ENCODE measurements at regions of chr6 and their contacts with region 1.

Region 1: GRCh38 chr6:27146706-27147505 is 100.6 kb upstream of the PRSS16 start:
- DNase-seq: peak; percentile 95
- CTCF ChIP-seq: no peak

Region 2: DNA sequence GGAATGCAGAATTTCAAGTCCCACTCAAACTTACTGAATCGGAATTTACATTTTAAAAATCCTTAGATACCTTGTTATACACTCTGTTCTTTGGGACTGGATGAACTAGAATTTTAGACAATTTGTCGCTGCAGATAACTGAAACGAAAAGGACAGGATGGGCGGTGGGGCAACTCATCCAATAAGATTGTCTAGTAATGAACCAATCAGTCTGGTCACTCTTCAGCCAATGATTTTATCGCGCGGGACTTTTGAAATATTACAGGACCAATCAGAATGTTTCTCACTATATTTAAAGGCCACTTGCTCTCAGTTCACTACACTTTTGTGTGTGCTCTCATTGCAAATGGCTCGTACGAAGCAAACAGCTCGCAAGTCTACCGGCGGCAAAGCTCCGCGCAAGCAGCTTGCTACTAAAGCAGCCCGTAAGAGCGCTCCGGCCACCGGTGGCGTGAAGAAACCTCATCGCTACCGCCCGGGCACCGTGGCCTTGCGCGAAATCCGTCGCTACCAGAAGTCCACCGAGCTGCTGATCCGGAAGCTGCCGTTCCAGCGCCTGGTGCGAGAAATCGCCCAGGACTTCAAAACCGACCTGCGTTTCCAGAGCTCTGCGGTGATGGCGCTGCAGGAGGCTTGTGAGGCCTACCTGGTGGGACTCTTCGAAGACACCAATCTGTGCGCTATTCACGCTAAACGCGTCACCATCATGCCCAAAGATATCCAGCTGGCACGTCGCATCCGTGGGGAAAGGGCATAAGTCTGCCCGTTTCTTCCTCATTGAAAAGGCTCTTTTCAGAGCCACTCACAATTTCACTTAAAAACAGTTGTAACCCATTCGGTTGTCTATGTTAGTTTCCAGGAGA is 1101.6 kb before region 1 on chr6:
- CTCF ChIA-PET with region 1: no interaction called
- POLR2A ChIA-PET with region 1: interaction called, 11 read pairs
- DNase-seq: peak; percentile 88
- CTCF ChIP-seq: peak; percentile 12

Region 3: GRCh38 chr6:26122793-26123674 is 1023.9 kb before region 1 on chr6:
- CTCF ChIA-PET with region 1: no interaction called
- POLR2A ChIA-PET with region 1: interaction called, 12 read pairs
- DNase-seq: peak; percentile 83
- CTCF ChIP-seq: no peak

Region 4: GRCh38 chr6:27126815-27127537 is 19.9 kb before region 1 on chr6:
- CTCF ChIA-PET with region 1: interaction called, 19 read pairs
- POLR2A ChIA-PET with region 1: interaction called, 211 read pairs
- DNase-seq: peak; percentile 77
- CTCF ChIP-seq: peak; percentile 90

Region 5: GRCh38 chr6:27132532-27133280 is 14.2 kb before region 1 on chr6:
- CTCF ChIA-PET with region 1: interaction called, 19 read pairs
- POLR2A ChIA-PET with region 1: interaction called, 211 read pairs
- DNase-seq: peak; percentile 95
- CTCF ChIP-seq: no peak

Region 6: DNA sequence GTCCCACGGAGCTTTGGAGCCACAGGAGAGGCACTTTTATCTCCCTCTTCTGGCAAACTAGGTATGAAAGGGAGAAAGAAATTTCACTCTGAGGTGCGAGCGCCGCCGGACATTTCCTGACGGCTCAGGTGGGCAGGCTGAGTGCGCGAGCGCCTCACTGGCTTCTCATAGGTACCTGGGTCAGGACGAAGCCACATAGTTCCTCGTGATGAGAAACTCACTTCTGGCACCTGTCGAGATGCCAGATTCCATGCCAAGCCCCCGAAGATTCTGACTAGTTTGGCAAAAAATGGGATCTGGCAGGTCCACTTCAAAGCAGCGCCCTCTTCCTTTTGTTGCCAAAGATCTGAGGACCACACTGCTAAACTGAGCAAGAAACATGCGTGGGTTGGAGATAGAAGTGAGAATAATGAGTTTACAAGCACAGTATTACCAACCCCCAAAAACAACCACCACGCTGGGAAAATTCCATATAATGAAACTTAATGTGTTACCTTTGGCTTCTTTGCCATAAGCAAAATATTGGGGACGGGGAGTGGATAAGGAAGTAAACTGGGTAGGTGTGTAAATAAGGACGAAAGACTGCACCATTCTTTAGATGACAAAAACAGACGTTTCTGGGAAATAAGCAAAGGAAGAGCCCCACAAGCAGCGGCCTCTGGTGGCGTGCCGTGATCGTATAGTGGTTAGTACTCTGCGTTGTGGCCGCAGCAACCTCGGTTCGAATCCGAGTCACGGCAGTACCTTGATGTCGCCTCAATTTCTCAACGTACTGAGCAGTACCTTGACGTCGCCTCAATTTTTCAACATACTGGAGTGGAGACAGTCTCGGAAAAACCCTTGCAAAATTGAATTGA is 10.8 kb after region 1 on chr6:
- CTCF ChIA-PET with region 1: interaction called, 18 read pairs
- POLR2A ChIA-PET with region 1: interaction called, 15 read pairs
- DNase-seq: peak; percentile 58
- CTCF ChIP-seq: peak; percentile 55

Region 7: DNA sequence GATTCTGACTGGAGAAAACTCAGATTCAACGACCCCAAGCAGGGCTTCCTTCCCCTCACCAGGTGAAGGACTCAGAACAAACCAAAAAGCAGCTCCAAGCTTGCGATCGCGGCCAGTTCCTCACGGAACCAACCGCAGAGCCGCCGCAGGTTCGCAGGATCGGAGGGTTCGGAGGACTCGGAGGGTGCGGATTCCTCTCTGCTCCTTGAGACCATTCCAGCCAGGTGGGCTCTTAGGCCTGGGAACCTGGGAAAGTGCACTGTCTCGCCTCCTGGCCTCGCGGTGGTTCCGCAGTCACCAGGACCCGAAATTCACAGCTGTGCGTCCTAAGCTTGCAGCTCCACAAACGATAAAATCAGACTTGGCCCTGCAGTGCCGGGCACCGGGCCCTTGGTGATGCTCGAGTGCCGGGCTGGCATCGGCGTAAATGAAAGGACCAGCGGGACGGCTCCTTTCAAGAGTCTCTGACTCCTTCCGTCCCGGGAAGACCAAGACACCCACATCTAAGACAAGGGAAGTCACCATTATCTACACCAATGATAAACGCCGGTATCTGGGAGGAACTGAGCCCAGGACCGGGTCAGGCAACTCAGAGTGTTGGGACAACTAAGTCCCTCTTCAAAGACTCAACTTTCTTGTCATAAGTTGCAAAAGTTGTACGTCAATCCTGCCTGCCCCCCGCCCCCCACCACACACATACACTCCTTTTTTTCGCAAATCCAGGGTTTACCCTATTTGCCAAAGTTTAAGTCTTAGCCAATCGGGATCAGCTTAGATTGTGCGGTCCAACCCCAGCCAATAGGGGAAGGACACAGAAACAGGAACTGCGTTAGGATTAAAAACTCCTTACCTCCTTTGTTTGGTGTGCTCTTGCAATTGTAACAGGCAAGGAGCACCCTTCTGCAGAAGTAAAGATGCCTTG is 30.8 kb after region 1 on chr6:
- CTCF ChIA-PET with region 1: interaction called, 4 read pairs
- POLR2A ChIA-PET with region 1: interaction called, 17 read pairs
- DNase-seq: peak; percentile 77
- CTCF ChIP-seq: peak; percentile 47

Measured in GM10248 (cell line).